ENCODE measurements at regions of chr3 and their contacts with region 1.

Region 1: DNA sequence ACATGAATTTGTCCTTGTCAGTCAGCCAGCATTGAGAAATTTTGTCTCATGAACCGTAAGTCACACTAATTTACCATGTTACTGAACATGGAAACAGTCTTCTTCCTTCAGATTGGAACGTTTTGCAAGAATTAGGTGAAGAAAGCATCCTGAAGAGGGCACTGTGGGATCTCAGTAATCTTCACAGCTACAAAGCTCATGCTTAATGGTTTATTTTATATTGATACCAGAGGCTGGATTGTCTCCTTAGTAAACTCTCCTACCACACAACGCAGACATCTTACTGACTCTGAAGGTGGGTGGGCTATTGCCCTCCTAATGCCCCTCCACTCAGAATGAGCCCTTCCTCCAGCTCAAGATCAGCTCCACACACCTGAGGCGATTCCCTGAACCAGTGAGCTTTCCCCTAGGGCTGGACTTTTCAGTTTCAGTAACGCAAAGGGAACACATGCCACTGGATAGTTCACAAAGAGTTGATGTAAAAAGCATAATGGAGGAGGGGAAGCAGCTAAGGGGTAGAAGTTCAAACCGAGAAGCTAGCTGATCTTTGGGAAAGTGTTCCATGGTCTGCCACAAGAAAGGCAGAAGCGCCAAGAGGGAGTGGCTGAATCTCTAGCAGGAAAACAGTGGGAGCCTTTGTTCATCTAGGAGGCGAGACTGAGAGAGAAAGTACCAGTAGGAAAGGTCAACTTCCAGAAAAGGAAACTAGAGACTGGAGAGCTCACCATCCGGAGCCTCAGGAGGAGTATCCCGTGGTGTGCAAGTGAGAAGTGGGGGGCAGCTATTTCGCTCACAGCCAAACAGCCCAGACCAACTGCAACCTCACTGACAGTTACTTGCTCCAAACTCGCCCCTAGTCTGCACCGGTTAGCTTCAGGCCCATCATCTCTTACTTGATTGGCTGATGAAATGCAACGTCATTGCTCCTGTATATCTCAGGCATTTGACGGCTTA is at the start of gene SLC9C1:
- DNase-seq: peak; percentile 82
- ATAC-seq: peak; percentile 88
- H3K4me3 ChIP-seq: peak within 1 kb of the TSS; percentile 61
- H3K27ac ChIP-seq: no peak within 1 kb of the TSS
- H3K4me1 ChIP-seq: no peaks in the 10 kb centered on the region
- H3K27me3 ChIP-seq: peaks cover 15% of the 10 kb centered on the region; the same call in 1 of the 2 replicates
- CTCF ChIP-seq: peak; percentile 82
- total RNA-seq, gene SLC9C1: not detected in 2 replicates

Region 2: GRCh38 chr3:112111785-112112402 is 181.8 kb before region 1 on chr3:
- CTCF ChIA-PET with region 1: interaction called, 4 read pairs
- POLR2A ChIA-PET with region 1: no interaction called
- intact Hi-C with region 1: loop called (anchors 1 kb)
- DNase-seq: peak; percentile 89
- ATAC-seq: peak; percentile 95
- H3K4me3 ChIP-seq: no peak overlapping the region
- H3K27ac ChIP-seq: no peak overlapping the region
- H3K4me1 ChIP-seq: peaks cover 13% of the 10 kb centered on the region
- H3K27me3 ChIP-seq: no peaks in the 10 kb centered on the region
- CTCF ChIP-seq: peak; percentile 94

Region 3: GRCh38 chr3:112437146-112438022 is 143.7 kb after region 1 on chr3:
- CTCF ChIA-PET with region 1: interaction called, 4 read pairs
- POLR2A ChIA-PET with region 1: no interaction called
- intact Hi-C with region 1: loop called (anchors 1 kb)
- DNase-seq: peak; percentile 75
- ATAC-seq: peak; percentile 98
- H3K4me3 ChIP-seq: no peak overlapping the region
- H3K27ac ChIP-seq: no peak overlapping the region
- H3K4me1 ChIP-seq: no peaks in the 10 kb centered on the region
- H3K27me3 ChIP-seq: peaks cover 46% of the 10 kb centered on the region
- CTCF ChIP-seq: peak; percentile 68

Region 4: GRCh38 chr3:112519424-112520001 is 225.9 kb after region 1 on chr3:
- CTCF ChIA-PET with region 1: interaction called, 4 read pairs
- POLR2A ChIA-PET with region 1: no interaction called
- intact Hi-C with region 1: loop called (anchors 1 kb)
- DNase-seq: peak; percentile 82
- ATAC-seq: peak; percentile 99
- H3K4me3 ChIP-seq: no peak overlapping the region
- H3K27ac ChIP-seq: no peak overlapping the region
- H3K4me1 ChIP-seq: no peaks in the 10 kb centered on the region
- H3K27me3 ChIP-seq: no peaks in the 10 kb centered on the region
- CTCF ChIP-seq: peak; percentile 84

Region 5: DNA sequence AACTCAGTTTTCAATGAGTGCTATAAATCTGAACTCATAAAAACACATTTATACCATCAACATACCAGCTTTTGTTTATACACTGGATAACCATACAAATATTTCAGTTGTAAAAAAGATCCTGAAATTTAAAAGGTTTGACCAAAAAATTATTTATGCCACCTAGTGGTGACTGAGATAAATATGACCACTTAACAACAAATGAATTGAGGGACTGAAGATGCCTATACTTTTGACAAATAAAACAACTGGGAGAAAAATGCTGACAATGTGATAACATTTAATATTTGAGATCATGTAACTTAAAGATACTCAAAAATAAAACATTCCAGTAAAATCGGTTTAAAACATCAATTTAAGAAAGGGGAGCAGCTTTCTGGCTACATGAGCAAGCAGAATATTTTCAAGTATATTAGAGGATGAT is 237.7 kb after region 1 on chr3:
- CTCF ChIA-PET with region 1: interaction called, 4 read pairs
- POLR2A ChIA-PET with region 1: no interaction called
- intact Hi-C with region 1: loop called (anchors 1 kb)
- DNase-seq: peak; percentile 71
- ATAC-seq: peak; percentile 4; the same call in 1 of the 2 replicates
- H3K4me3 ChIP-seq: no peak overlapping the region
- H3K27ac ChIP-seq: peak overlapping the region; percentile 68; the same call in 1 of the 2 replicates
- H3K4me1 ChIP-seq: peaks cover 20% of the 10 kb centered on the region
- H3K27me3 ChIP-seq: no peaks in the 10 kb centered on the region
- CTCF ChIP-seq: peak; percentile 86

Measured in PC-3 (cell line).